IMR-90 (cell line): ENCODE measurements at regions of chr4 and their contacts with region 1.

Region 1: GRCh38 chr4:168631241-168632162 is 134.7 kb downstream of the PALLD start:
- DNase-seq: peak; percentile 55
- ATAC-seq: peak; percentile 78
- H3K4me3 ChIP-seq: peak overlapping the region; percentile 54
- H3K27ac ChIP-seq: peak overlapping the region; percentile 59
- H3K4me1 ChIP-seq: peaks cover 18% of the 10 kb centered on the region
- H3K27me3 ChIP-seq: no peaks in the 10 kb centered on the region
- CTCF ChIP-seq: peak; percentile 45
- POLR2A ChIP-seq: no peak
- RAD21 ChIP-seq: peak; percentile 50

Region 2: GRCh38 chr4:168480931-168481611 is 150.4 kb before region 1 on chr4:
- CTCF ChIA-PET with region 1: no interaction called
- POLR2A ChIA-PET with region 1: no interaction called
- dilution Hi-C with region 1: no loop called
- in situ Hi-C with region 1: no loop called
- intact Hi-C with region 1: loop called (anchors 2 kb)
- DNase-seq: peak; percentile 85
- ATAC-seq: peak; percentile 21; the same call in 1 of the 2 replicates
- H3K4me3 ChIP-seq: peak overlapping the region; percentile 62
- H3K27ac ChIP-seq: peak overlapping the region; percentile 80
- H3K4me1 ChIP-seq: peaks cover 10% of the 10 kb centered on the region
- H3K27me3 ChIP-seq: no peaks in the 10 kb centered on the region
- CTCF ChIP-seq: no peak
- POLR2A ChIP-seq: no peak
- RAD21 ChIP-seq: no peak

Region 3: GRCh38 chr4:168674077-168674747 is 42.7 kb after region 1 on chr4:
- CTCF ChIA-PET with region 1: interaction called, 9 read pairs
- POLR2A ChIA-PET with region 1: interaction called, 3 read pairs
- dilution Hi-C with region 1: no loop called
- in situ Hi-C with region 1: no loop called
- intact Hi-C with region 1: loop called (anchors 5 kb)
- DNase-seq: peak; percentile 65
- ATAC-seq: peak; percentile 85
- H3K4me3 ChIP-seq: no peak overlapping the region
- H3K27ac ChIP-seq: peak overlapping the region; percentile 64; the same call in 1 of the 2 replicates
- H3K4me1 ChIP-seq: peaks cover 10% of the 10 kb centered on the region; the same call in 1 of the 2 replicates
- H3K27me3 ChIP-seq: no peaks in the 10 kb centered on the region
- CTCF ChIP-seq: no peak
- POLR2A ChIP-seq: no peak
- RAD21 ChIP-seq: no peak

Region 4: GRCh38 chr4:168815379-168816345 is 184.2 kb after region 1 on chr4:
- CTCF ChIA-PET with region 1: no interaction called
- POLR2A ChIA-PET with region 1: interaction called, 3 read pairs
- dilution Hi-C with region 1: no loop called
- in situ Hi-C with region 1: no loop called
- intact Hi-C with region 1: loop called (anchors 2 kb)
- DNase-seq: peak; percentile 87
- ATAC-seq: peak; percentile 69
- H3K4me3 ChIP-seq: peak overlapping the region; percentile 5; the same call in 1 of the 2 replicates
- H3K27ac ChIP-seq: peak overlapping the region; percentile 92
- H3K4me1 ChIP-seq: peaks cover 19% of the 10 kb centered on the region
- H3K27me3 ChIP-seq: no peaks in the 10 kb centered on the region
- CTCF ChIP-seq: no peak
- POLR2A ChIP-seq: peak; percentile 73
- RAD21 ChIP-seq: 0 out of 2 replicates have a peak, but pooled peaks have one; percentile 5

Region 5: DNA sequence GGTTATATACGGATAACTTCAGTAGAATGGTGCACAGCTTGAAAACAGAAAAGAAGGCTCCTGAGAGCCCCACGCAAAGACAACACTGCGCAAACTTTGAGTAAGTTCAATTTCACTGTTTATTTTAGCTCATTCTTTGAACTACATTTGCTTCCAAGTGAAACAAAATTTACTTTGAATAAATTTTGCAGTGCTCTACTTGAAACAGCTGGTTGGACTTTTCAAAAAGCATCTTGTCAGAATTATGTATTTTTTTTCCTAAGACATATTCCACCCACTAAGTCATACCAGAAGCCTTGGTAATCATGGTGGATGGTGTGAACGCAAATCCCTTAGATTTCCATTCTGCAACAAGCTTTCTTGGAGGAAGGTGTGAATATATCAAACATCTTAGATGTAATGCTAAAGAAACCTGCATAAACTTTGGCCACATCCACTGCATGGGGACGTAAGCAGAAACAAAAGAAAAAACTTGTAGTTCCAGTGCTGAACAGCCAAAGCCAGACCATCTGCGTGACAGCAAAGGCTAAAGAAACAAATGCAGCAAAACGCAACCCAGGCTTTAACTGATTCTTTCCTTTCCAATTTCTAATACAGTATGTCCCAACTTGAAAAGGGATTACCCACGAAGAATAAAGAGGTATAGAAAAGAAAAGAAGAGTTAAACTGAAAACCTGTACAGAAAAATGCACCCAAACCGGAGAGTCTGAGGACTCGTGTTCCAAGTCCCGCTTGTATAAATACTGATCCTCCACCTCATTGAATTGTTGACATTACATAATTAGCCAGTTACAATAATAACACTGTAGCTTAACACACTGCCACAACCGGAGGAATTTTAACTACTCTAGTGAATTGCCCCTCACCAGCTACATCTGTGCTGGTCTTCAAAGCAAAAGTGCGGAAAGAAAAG is 548.4 kb after region 1 on chr4:
- CTCF ChIA-PET with region 1: no interaction called
- POLR2A ChIA-PET with region 1: no interaction called
- dilution Hi-C with region 1: no loop called
- in situ Hi-C with region 1: no loop called
- intact Hi-C with region 1: no loop called
- DNase-seq: peak; percentile 40
- ATAC-seq: peak; percentile 45
- H3K4me3 ChIP-seq: no peak overlapping the region
- H3K27ac ChIP-seq: peak overlapping the region; percentile 23; the same call in 1 of the 2 replicates
- H3K4me1 ChIP-seq: peaks cover 8% of the 10 kb centered on the region
- H3K27me3 ChIP-seq: no peaks in the 10 kb centered on the region
- CTCF ChIP-seq: no peak
- POLR2A ChIP-seq: no peak
- RAD21 ChIP-seq: no peak